Caco-2 (cell line): ENCODE measurements at regions of chr20 and their contacts with region 1.

Region 1: GRCh38 chr20:48295445-48295963 is 510.2 kb upstream of the SULF2 start:
- DNase-seq: peak; percentile 95 to 96
- H3K4me3 ChIP-seq: no peak overlapping the region
- H3K4me3 Mint-ChIP-seq: peak overlapping the region; percentile 53
- H3K27ac Mint-ChIP-seq: peak overlapping the region; percentile 95
- H3K4me1 ChIP-seq: peaks cover 43% of the 10 kb centered on the region
- H3K4me1 Mint-ChIP-seq: peaks cover 66% of the 10 kb centered on the region
- H3K27me3 ChIP-seq: no peaks in the 10 kb centered on the region
- H3K27me3 Mint-ChIP-seq: no peaks in the 10 kb centered on the region
- CTCF ChIP-seq: peak; percentile 73 to 77

Region 2: GRCh38 chr20:47663333-47664067 is 632.0 kb before region 1 on chr20:
- CTCF ChIA-PET with region 1: interaction called, 24 read pairs
- POLR2A ChIA-PET with region 1: no interaction called
- intact Hi-C with region 1: loop called (anchors 1 kb)
- DNase-seq: peak; percentile 92 to 97
- H3K4me3 ChIP-seq: no peak overlapping the region
- H3K4me3 Mint-ChIP-seq: no peak overlapping the region
- H3K27ac Mint-ChIP-seq: peak overlapping the region; percentile 56
- H3K4me1 ChIP-seq: peaks cover 16% of the 10 kb centered on the region
- H3K4me1 Mint-ChIP-seq: peaks cover 18% of the 10 kb centered on the region
- H3K27me3 ChIP-seq: no peaks in the 10 kb centered on the region
- H3K27me3 Mint-ChIP-seq: no peaks in the 10 kb centered on the region
- CTCF ChIP-seq: peak; percentile 99 to 100

Region 3: GRCh38 chr20:47725248-47725973 is 570.1 kb before region 1 on chr20:
- CTCF ChIA-PET with region 1: interaction called, 19 read pairs
- POLR2A ChIA-PET with region 1: no interaction called
- intact Hi-C with region 1: loop called (anchors 1 kb)
- DNase-seq: peak; percentile 94 to 95
- H3K4me3 ChIP-seq: no peak overlapping the region
- H3K4me3 Mint-ChIP-seq: no peak overlapping the region
- H3K27ac Mint-ChIP-seq: no peak overlapping the region
- H3K4me1 ChIP-seq: peaks cover 12% of the 10 kb centered on the region
- H3K4me1 Mint-ChIP-seq: peaks cover 9% of the 10 kb centered on the region
- H3K27me3 ChIP-seq: no peaks in the 10 kb centered on the region
- H3K27me3 Mint-ChIP-seq: no peaks in the 10 kb centered on the region
- CTCF ChIP-seq: peak; percentile 99 to 100

Region 4: DNA sequence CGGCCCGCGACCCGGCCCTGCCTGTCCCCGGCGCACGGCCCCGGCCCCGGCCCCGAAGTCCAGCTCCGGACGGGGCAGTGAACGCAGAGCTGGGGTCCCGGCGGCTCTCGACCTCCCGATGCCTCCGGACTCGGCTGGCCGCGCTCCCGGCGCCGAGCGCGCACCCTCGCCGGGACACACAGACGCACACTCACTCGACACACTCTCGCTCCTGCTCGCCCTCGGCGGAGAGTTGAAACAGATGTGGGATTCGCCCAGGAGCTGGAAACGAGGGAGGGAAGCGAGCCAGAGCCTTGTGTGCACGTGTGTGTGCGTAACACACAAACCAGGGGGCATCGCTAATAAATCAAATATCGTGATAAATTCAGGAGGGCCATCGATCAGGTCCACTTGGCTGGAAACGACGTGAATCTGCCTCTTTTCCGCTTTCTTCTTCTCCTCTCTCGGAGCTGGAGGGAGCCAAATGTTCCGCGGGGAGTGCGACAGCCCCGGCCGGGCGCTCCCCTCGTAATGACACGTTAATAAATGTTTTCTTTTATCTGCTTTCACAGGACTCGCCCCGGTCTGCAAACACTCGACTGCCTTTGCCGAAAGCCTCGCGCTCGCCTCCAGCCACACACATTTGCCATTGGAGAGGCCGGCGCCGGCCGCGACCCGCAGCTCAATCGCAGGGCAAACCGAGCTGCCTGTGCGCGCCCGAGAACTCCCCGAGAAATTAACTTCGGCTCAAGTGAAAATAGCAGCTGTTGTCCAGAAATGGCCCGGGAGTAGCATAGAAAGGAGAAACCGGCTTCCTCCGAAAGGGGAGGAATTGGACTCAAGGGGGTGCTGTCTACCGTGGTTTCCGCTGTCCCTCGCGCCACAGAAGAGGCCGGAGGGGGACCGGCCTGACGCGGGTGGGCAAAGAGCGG is 509.4 kb before region 1 on chr20:
- CTCF ChIA-PET with region 1: interaction called, 80 read pairs
- POLR2A ChIA-PET with region 1: interaction called, 14 read pairs
- intact Hi-C with region 1: loop called (anchors 1 kb)
- DNase-seq: peak; percentile 89 to 91
- H3K4me3 ChIP-seq: peak overlapping the region; percentile 55
- H3K4me3 Mint-ChIP-seq: peak overlapping the region; percentile 96
- H3K27ac Mint-ChIP-seq: peak overlapping the region; percentile 85
- H3K4me1 ChIP-seq: peaks cover 19% of the 10 kb centered on the region
- H3K4me1 Mint-ChIP-seq: peaks cover 35% of the 10 kb centered on the region
- H3K27me3 ChIP-seq: no peaks in the 10 kb centered on the region
- H3K27me3 Mint-ChIP-seq: peaks cover 2% of the 10 kb centered on the region
- CTCF ChIP-seq: peak; percentile 93

Region 5: GRCh38 chr20:47905612-47906347 is 389.7 kb before region 1 on chr20:
- CTCF ChIA-PET with region 1: interaction called, 13 read pairs
- POLR2A ChIA-PET with region 1: no interaction called
- intact Hi-C with region 1: no loop called
- DNase-seq: no peak
- H3K4me3 ChIP-seq: no peak overlapping the region
- H3K4me3 Mint-ChIP-seq: no peak overlapping the region
- H3K27ac Mint-ChIP-seq: no peak overlapping the region
- H3K4me1 ChIP-seq: no peaks in the 10 kb centered on the region
- H3K4me1 Mint-ChIP-seq: peaks cover 2% of the 10 kb centered on the region
- H3K27me3 ChIP-seq: no peaks in the 10 kb centered on the region
- H3K27me3 Mint-ChIP-seq: no peaks in the 10 kb centered on the region
- CTCF ChIP-seq: no peak

Region 6: GRCh38 chr20:48188657-48189551 is 106.6 kb before region 1 on chr20:
- CTCF ChIA-PET with region 1: interaction called, 30 read pairs
- POLR2A ChIA-PET with region 1: interaction called, 3 read pairs
- intact Hi-C with region 1: loop called (anchors 2 kb)
- DNase-seq: peak; percentile 67
- H3K4me3 ChIP-seq: no peak overlapping the region
- H3K4me3 Mint-ChIP-seq: no peak overlapping the region
- H3K27ac Mint-ChIP-seq: no peak overlapping the region
- H3K4me1 ChIP-seq: peaks cover 18% of the 10 kb centered on the region
- H3K4me1 Mint-ChIP-seq: peaks cover 26% of the 10 kb centered on the region
- H3K27me3 ChIP-seq: no peaks in the 10 kb centered on the region
- H3K27me3 Mint-ChIP-seq: no peaks in the 10 kb centered on the region
- CTCF ChIP-seq: peak; percentile 45 to 90